SK-N-SH (cell line): ENCODE measurements at regions of chr6 and their contacts with region 1.

Region 1: GRCh38 chr6:99467509-99468106 is 42.5 kb upstream of the PNISR start:
- DNase-seq: peak; percentile 46
- H3K4me3 ChIP-seq: no peak overlapping the region
- H3K27ac ChIP-seq: no peak overlapping the region
- H3K4me1 ChIP-seq: peaks cover 0 to 4% of the 10 kb centered on the region in 2 experiments; a peak in 2 of 4 replicates
- H3K27me3 ChIP-seq: no peaks in the 10 kb centered on the region
- CTCF ChIP-seq: peak; percentile 75
- EP300 ChIP-seq: no peak
- RAD21 ChIP-seq: peak; percentile 87

Region 2: GRCh38 chr6:99543968-99544367 is 76.4 kb after region 1 on chr6:
- CTCF ChIA-PET with region 1: no interaction called
- POLR2A ChIA-PET with region 1: no interaction called
- DNase-seq: no peak
- H3K4me3 ChIP-seq: no peak overlapping the region
- H3K27ac ChIP-seq: no peak overlapping the region
- H3K4me1 ChIP-seq: no peaks in the 10 kb centered on the region; a peak in 1 of 4 replicates
- H3K27me3 ChIP-seq: no peaks in the 10 kb centered on the region
- CTCF ChIP-seq: peak; percentile 24; the same call in 1 of the 2 replicates
- EP300 ChIP-seq: no peak
- RAD21 ChIP-seq: no peak

Region 3: DNA sequence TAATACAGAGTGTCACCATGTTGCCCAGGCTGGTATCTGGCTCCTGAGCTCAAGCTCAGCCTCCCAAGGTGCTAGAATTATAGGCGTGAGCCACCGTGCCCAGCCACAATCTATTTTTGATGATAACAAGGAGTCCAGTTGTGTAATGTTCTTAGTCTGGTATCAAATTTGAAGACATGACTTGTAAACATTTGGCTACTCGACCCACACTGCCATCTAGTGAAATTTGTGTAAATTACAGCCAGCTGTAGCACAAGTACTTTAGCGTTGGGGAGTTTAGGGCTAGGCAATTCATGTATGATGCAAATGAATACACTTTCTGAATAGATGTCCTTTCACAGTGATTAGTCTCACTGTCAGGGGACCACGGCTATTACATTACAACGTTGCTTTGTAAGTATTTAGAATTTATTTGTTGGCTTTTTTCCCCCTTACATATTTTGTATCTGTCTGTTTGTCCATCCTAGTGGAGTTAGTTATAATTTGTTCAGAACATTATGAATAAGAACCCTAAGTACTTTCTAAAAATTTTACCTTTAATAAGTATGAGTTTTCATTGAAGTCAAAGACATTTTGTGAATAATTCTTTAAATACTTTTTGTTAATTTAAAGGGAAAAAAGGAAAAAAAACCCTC is 278.8 kb after region 1 on chr6:
- CTCF ChIA-PET with region 1: interaction called, 23 read pairs
- POLR2A ChIA-PET with region 1: no interaction called
- DNase-seq: peak; percentile 39
- H3K4me3 ChIP-seq: no peak overlapping the region; a peak in 1 of 4 replicates
- H3K27ac ChIP-seq: no peak overlapping the region
- H3K4me1 ChIP-seq: no peaks in the 10 kb centered on the region
- H3K27me3 ChIP-seq: no peaks in the 10 kb centered on the region; the same call in 1 of the 2 replicates
- CTCF ChIP-seq: peak; percentile 85
- EP300 ChIP-seq: no peak
- RAD21 ChIP-seq: peak; percentile 76